Activated T-helper 2 cell treated with anti-CD3 and anti-CD28 coated beads, Interferon-gamma antibody, Interleukin-2, Interleukin-4, amounts not matched to agents 10 μg/mL and 5 μg/mL and 100 μg/mL, durations not matched to agents 14 hours and 24 hours and 36 hours (primary cell): ENCODE measurements at regions of chrX and their contacts with region 1.

Region 1: DNA sequence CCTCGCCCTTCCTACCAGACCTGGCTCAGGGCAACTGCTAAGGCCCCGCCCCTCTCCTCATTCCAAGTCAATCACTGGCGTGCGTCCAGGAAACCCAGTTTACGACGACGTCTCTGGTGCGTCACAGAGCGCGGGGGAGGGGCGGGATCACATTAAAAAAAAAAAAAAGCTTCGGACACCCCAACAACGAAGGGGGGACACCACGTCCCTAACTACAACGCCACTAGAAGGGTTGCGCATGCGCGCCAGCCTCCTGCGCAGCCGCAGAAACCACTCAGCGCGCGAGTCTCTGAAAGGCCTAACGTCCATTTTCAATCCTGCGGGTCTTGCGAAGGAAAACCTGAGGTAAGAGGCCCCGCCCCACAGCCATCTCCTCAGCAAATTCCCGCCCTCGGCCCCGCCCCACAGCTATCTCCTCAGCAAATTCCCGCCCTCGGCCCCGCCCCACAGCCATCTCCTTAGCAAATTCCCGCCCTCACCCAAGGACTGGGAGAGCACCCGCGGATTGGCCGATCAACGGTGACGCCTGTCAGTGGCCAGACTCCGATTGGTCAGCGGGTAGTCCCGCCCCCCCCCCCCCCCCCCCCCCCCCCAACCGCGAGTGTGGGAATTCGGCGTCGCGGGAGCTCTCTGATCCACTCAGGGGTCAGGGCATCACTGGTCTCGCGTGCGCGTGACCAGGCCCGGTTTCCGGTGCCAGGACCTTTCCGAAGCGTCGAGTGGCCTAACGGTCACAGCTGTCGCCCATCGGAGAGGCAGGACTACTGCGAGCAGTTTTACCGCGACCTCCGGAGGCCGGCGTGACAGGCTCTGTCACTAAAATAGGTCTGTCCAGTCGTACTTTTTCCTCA is at the start of gene SCML1:
- DNase-seq: peak; percentile 77
- H3K4me3 Mint-ChIP-seq: peak within 1 kb of the TSS; percentile 70
- H3K27ac Mint-ChIP-seq: peak within 1 kb of the TSS; percentile 46
- H3K4me1 Mint-ChIP-seq: peaks cover 19% of the 10 kb centered on the region
- H3K27me3 Mint-ChIP-seq: peaks cover 38% of the 10 kb centered on the region
- total RNA-seq, gene SCML1: 0.78 and 0.83 TPM in 2 replicates

Region 2: DNA sequence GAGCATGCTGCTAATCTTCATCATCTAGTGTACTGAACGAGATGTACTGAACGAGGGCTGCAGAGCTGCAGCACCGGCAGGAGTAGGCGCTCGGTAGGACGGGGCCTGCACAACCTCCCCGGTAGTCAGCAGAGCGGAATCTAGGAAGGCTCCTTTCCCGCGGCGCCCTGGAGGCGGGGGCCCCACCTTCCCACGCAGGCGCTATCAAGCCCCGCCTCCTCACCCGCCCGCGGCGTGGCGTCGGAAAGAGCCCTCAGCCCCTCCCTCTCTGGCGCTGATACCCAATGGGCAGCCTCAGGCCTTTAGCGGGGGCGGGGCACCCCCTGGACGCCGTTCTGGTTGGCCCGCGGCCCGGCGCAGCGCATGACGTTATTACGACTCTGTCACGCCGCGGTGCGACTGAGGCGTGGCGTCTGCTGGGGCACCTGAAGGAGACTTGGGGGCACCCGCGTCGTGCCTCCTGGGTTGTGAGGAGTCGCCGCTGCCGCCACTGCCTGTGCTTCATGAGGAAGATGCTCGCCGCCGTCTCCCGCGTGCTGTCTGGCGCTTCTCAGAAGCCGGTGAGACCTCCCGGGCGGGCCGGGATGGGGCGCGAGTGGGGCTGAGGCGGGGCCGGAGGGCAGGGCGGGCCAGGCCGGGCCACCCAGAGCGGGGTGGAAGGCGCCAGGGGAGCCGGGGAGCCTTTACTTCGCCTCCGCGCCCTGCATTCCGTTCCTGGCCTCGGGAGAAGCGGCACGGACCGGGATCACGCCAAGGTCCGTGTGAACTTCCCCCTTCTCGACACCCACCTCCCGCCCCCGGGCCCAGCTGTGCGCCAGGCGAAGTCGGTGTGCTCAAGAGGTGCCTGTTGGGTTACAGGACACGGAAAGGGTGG is 1606.7 kb after region 1 on chrX and contains the start of gene PDHA1:
- intact Hi-C with region 1: loop called (anchors 5 kb)
- DNase-seq: peak; percentile 88
- H3K4me3 Mint-ChIP-seq: peak within 1 kb of the TSS; percentile 85
- H3K27ac Mint-ChIP-seq: peak within 1 kb of the TSS; percentile 76
- H3K4me1 Mint-ChIP-seq: peaks cover 15% of the 10 kb centered on the region
- H3K27me3 Mint-ChIP-seq: no peaks in the 10 kb centered on the region
- total RNA-seq, gene PDHA1: 200 and 208 TPM in 2 replicates